Natural killer cell (primary cell): ENCODE measurements at regions of chr19 and their contacts with region 1.

Region 1: GRCh38 chr19:58154679-58155648 is 4.4 kb upstream of the ZNF329 start:
- DNase-seq: peak; percentile 97 to 99
- ATAC-seq: peak; percentile 85 to 97 (median 87)
- H3K4me3 ChIP-seq: peak overlapping the region; percentile 75
- H3K4me3 Mint-ChIP-seq: peak overlapping the region; percentile 82
- H3K27ac ChIP-seq: peak overlapping the region; percentile 73
- H3K27ac Mint-ChIP-seq: peak overlapping the region; percentile 53 to 82
- H3K4me1 ChIP-seq: peaks cover 21% of the 10 kb centered on the region
- H3K4me1 Mint-ChIP-seq: peaks cover 9 to 10% of the 10 kb centered on the region in 2 donors
- H3K27me3 ChIP-seq: no peaks in the 10 kb centered on the region
- H3K27me3 Mint-ChIP-seq: no peaks in the 10 kb centered on the region
- CTCF ChIP-seq: peak; percentile 88

Region 2: DNA sequence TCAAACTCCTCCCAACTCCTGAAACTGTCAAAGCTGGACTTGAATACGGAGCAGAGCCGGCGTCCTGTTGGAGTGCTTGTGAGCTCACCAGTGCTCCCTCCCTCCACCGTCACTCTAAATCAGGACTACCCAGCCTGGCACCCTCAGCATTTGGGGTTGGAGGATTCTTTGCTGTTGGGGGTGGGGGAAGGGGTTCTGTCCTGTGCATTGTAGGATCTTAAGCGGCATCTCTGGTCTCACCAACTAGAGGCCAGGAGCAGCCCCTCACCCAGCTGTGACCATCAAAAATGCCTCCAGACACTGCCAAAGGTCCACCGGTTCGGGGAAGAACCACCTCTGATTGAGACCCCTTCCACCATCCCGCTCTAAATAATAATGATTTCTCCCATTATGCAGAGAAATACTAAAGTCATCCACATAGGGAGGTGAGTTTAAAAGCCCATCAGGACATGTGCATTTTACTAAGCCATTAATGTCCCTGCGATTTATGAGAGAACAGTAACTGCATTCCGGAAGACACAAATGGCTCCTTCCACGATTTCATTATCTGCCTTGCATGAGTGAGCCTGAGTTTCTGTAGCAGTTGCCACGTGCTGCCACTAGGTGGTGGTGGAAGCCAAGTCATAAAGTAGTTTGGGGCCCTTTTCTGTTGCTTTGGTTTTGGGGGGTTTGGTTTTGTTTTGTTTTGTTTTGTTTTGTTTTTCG is 1051.2 kb before region 1 on chr19:
- intact Hi-C with region 1: loop called (anchors 10 kb)
- DNase-seq: peak; percentile 50 to 79
- ATAC-seq: peak; percentile 65 to 92 (median 82)
- H3K4me3 ChIP-seq: no peak overlapping the region
- H3K4me3 Mint-ChIP-seq: no peak overlapping the region
- H3K27ac ChIP-seq: no peak overlapping the region
- H3K27ac Mint-ChIP-seq: peak overlapping the region in 1 of 2 donors; percentile 44
- H3K4me1 ChIP-seq: no peaks in the 10 kb centered on the region
- H3K4me1 Mint-ChIP-seq: peaks cover 0 to 6% of the 10 kb centered on the region in 2 donors
- H3K27me3 ChIP-seq: peaks cover 3% of the 10 kb centered on the region
- H3K27me3 Mint-ChIP-seq: peaks cover 7 to 11% of the 10 kb centered on the region in 2 donors
- CTCF ChIP-seq: peak; percentile 69

Region 3: DNA sequence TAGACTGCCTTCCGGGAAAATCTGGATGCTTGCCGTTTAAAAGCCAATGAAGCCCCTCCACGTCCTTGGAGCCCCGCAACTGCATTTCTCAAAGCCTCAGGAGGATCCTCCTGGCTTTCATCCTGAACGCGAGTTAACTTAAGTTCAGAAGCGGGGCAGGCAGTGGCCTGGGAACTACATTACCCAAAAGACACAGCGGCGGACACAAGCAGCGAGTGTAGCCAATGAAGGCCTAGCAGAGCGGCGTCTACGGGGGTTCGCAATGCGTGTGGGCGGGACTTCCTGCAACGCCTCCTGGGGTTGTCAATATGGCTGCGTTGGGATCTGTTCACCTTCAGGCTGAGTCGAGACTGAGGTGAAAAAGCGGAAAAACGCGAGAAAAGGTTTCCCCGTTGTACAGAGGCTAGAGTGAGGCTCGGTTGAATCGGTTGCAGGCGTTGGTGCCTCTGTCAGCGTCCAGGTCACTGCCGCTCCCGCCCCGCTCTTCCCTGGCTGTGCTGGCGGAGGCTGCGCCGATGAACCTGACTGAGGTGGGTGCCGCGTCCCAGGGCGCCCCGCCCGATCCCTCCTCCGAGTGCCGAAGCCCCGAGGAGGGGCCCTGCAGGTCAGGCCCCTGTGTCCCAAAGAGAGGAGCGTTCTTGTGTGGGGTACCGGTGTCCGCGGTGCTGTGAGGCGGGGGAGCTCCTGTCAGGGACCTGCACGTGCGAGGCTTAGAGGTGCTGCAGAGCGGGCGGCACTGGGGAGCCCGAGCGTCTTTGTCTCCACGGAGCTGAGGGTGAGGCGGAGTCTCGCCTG is 743.9 kb before region 1 on chr19 and contains the start of gene ZNF17:
- intact Hi-C with region 1: loop called (anchors 1 kb)
- DNase-seq: peak; percentile 84 to 96
- ATAC-seq: peak; percentile 99 to 100 (median 100)
- H3K4me3 ChIP-seq: peak within 1 kb of the TSS; percentile 86
- H3K4me3 Mint-ChIP-seq: peak within 1 kb of the TSS; percentile 94
- H3K27ac ChIP-seq: peak within 1 kb of the TSS; percentile 62
- H3K27ac Mint-ChIP-seq: peak within 1 kb of the TSS; percentile 84
- H3K4me1 ChIP-seq: peaks cover 18% of the 10 kb centered on the region
- H3K4me1 Mint-ChIP-seq: peaks cover 29 to 37% of the 10 kb centered on the region in 2 donors
- H3K27me3 ChIP-seq: no peaks in the 10 kb centered on the region
- H3K27me3 Mint-ChIP-seq: no peaks in the 10 kb centered on the region
- CTCF ChIP-seq: no peak
- total RNA-seq, gene ZNF17: 13.0 to 15.0 (median 13.3) TPM

Region 4: DNA sequence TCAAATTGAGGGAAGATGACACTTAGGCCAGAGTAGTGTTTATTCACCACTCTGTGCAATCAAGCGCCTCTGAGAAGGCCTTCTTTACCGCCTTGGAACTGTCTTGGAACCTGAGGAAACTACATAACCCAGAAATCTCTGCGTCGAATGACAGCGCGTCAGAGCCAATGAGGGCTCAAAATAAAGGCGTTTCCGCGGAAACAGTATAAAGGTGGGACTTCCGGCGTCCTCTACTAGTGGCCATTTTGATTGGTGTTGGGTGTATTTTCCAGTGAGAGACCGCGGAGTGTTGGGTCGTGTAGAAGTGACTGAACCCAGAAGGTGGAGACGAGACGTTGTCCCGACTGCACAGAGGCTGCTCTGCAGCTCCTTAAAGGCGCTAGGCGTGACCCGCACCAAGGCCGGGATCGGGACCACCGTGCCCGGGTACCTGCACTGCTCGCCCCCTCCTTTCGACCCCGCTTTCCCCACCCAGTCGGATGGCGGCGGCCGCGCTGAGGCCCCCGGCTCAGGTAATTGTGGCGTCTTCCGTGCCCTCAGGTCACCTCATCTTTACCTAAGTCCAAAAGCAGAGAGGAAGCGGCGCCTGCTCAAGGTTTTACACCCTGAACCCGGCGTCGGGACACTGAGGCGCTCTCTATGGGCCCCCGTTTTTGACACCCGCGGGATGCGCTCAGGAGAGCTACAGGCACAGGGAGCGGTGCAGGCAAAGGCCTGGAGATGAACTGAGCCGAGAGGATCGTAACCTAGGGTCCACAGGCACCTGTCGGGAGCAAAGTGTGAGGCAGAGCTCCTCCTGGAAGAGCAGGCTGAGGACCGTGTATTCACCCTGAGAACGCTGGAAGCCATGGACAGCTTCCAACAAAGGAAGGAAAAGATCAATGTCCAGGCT is 408.1 kb before region 1 on chr19 and contains the start of gene ZNF776:
- intact Hi-C with region 1: loop called (anchors 5 kb)
- DNase-seq: peak; percentile 73 to 93
- ATAC-seq: peak; percentile 97 to 99 (median 98)
- H3K4me3 ChIP-seq: peak within 1 kb of the TSS; percentile 69
- H3K4me3 Mint-ChIP-seq: peak within 1 kb of the TSS; percentile 93
- H3K27ac ChIP-seq: peak within 1 kb of the TSS; percentile 75
- H3K27ac Mint-ChIP-seq: peak within 1 kb of the TSS; percentile 99
- H3K4me1 ChIP-seq: peaks cover 11% of the 10 kb centered on the region
- H3K4me1 Mint-ChIP-seq: peaks cover 25 to 40% of the 10 kb centered on the region in 2 donors
- H3K27me3 ChIP-seq: no peaks in the 10 kb centered on the region
- H3K27me3 Mint-ChIP-seq: no peaks in the 10 kb centered on the region
- CTCF ChIP-seq: no peak
- total RNA-seq, gene ZNF776: 10.5 to 19.2 (median 18.7) TPM

Region 5: GRCh38 chr19:58021541-58022282 is 133.3 kb before region 1 on chr19:
- intact Hi-C with region 1: loop called (anchors 1 kb)
- DNase-seq: peak; percentile 33 to 68
- ATAC-seq: peak; percentile 76 to 100 (median 99)
- H3K4me3 ChIP-seq: no peak overlapping the region
- H3K4me3 Mint-ChIP-seq: no peak overlapping the region
- H3K27ac ChIP-seq: no peak overlapping the region
- H3K27ac Mint-ChIP-seq: no peak overlapping the region
- H3K4me1 ChIP-seq: no peaks in the 10 kb centered on the region
- H3K4me1 Mint-ChIP-seq: no peaks in the 10 kb centered on the region
- H3K27me3 ChIP-seq: no peaks in the 10 kb centered on the region
- H3K27me3 Mint-ChIP-seq: peaks cover 0 to 2% of the 10 kb centered on the region in 2 donors
- CTCF ChIP-seq: peak; percentile 65

Region 6: DNA sequence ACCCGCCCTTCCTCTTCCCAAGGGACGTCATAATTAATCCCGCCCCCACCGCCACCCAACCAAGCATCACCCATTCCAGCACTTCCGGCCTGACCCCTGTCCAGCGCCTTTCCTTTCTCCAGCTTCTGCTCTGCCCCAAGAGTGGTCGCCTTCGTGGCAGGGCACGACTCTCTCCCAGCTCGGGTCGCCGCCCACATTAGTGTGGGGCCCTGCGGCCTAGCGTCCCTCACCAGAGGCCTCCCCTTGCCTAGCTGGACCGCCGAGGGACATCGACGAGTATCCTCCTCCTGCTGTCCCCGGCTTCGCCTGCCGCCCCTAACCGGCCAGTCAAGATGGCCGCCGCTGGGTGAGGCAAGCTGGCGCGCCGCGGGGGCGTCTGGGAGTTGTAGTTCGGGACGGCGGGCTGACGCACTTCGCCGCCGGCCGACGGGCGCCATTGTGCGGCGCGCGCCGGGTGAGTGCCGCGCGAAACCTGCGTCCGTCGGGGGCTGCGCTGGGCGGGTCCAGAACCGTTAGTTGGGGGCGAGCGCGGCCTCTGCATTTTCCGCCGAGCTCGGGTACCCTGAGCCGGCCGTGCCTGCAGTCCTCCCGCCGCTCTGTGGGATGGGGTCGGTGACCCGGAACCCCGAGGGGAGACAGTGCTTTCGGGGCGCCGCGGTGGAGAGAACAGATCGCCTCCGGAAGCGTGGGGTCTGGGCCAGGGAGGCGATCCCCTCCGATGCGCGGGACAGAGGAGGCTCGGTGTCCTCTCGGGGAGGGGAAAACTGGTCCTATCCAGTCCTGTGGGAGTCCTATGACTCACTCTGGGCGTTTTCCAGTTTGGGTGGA is 28.2 kb after region 1 on chr19 and contains the start of gene ZNF274:
- intact Hi-C with region 1: no loop called
- DNase-seq: peak; percentile 95
- ATAC-seq: peak; percentile 81 to 95 (median 90)
- H3K4me3 ChIP-seq: peak within 1 kb of the TSS; percentile 88
- H3K4me3 Mint-ChIP-seq: peak within 1 kb of the TSS; percentile 98
- H3K27ac ChIP-seq: peak within 1 kb of the TSS; percentile 99
- H3K27ac Mint-ChIP-seq: peak within 1 kb of the TSS; percentile 100
- H3K4me1 ChIP-seq: peaks cover 19% of the 10 kb centered on the region
- H3K4me1 Mint-ChIP-seq: peaks cover 17 to 22% of the 10 kb centered on the region in 2 donors
- H3K27me3 ChIP-seq: no peaks in the 10 kb centered on the region
- H3K27me3 Mint-ChIP-seq: no peaks in the 10 kb centered on the region
- CTCF ChIP-seq: no peak
- total RNA-seq, gene ZNF274: 25.5 to 33.0 (median 30.1) TPM

Region 7: DNA sequence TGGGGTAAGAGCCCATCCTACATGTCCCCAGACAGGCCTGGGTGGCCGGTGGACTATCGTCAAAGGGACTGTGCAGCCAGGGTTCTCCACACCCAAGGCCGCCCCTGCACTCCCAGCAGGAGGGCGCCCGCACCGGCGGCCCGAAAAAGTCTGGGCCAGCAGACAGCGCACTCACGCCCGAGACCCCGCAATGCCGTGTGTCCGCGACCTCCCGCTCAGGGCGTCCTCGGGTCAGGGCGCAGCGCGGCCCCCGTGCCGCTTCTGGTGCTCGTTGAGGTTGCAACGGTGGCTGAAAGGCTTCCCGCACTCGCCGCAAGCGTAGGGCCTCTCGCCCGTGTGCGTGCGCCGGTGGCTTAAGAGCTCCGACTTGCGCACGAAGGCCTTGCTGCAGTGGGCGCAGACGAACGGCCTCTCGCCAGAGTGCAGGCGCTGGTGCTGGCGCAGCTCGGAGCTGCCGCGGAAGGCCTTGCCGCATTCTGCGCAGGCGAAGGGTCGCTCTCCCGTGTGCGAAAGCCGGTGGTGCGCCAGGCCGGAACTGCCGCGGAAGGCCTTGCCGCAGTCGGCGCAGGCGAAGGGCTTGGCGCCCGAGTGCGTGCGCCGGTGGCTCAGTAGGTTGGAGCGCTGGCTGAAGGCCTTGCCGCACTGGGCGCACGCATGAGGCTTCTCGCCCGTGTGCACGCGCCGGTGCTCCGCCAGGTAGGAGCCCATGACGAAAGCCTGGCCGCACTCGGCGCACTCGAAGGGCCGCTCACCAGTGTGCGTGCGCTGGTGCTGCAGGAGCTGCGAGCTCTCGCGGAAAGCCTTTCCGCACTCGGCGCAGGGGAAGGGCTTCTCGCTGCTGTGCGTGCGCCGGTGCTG is 201.2 kb after region 1 on chr19:
- intact Hi-C with region 1: no loop called
- DNase-seq: peak in 1 of 2 donors; percentile 71
- ATAC-seq: peak; percentile 25 to 82 (median 77)
- H3K4me3 ChIP-seq: peak overlapping the region; percentile 10
- H3K4me3 Mint-ChIP-seq: peak overlapping the region; percentile 73
- H3K27ac ChIP-seq: no peak overlapping the region
- H3K27ac Mint-ChIP-seq: no peak overlapping the region
- H3K4me1 ChIP-seq: peaks cover 19% of the 10 kb centered on the region
- H3K4me1 Mint-ChIP-seq: peaks cover 0 to 7% of the 10 kb centered on the region in 2 donors
- H3K27me3 ChIP-seq: no peaks in the 10 kb centered on the region
- H3K27me3 Mint-ChIP-seq: peaks cover 0 to 5% of the 10 kb centered on the region in 2 donors
- CTCF ChIP-seq: no peak